H1 (cell line): ENCODE measurements at regions of chr3 and their contacts with region 1.

Region 1: GRCh38 chr3:127598841-127599570 is 795 bp downstream of the MCM2 start:
- DNase-seq: no peak
- H3K4me3 ChIP-seq: peak overlapping the region; percentile 74 to 84 (median 78)
- H3K27ac ChIP-seq: peak overlapping the region; percentile 97
- H3K4me1 ChIP-seq: peaks cover 9 to 12% (median 9%) of the 10 kb centered on the region in 4 experiments
- H3K27me3 ChIP-seq: no peaks in the 10 kb centered on the region
- CTCF ChIP-seq: no peak
- EP300 ChIP-seq: no peak
- POLR2A ChIP-seq: peak in 1 of 2 experiments; percentile 22; a peak in 1 of 3 replicates
- RAD21 ChIP-seq: no peak

Region 2: DNA sequence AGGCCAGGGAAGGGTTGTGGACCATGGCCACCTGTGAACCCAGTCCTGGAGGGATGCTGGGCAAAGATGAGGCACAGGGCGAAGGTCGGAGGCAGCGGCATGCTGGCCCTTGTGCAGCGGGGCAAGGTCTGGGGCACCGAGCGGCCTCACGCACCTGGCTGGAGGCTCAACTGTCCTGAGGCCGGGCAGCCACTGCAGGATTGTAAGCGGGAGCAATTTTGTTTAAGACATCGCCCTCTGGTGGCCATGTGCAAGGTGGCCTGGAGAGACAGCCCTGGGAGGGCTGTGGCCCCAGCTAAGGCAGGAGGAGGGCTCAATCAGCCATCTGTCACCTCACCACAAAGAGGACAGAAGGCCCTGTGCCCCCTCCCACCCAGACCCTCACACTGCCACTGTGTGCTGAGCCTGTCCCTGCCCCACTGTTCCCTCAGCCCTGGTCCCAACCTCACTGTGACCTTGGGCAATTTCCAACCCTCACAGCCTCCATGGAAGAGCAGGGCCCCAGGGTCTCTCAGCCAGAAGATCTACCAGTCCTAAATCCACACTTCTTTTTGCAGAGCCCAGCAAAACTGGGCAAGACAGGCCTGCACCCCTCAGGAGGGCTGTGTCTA is 54.7 kb before region 1 on chr3:
- CTCF ChIA-PET with region 1: no interaction called
- POLR2A ChIA-PET with region 1: no interaction called
- DNase-seq: peak in 1 of 2 experiments; percentile 91
- H3K4me3 ChIP-seq: no peak overlapping the region
- H3K27ac ChIP-seq: no peak overlapping the region
- H3K4me1 ChIP-seq: peaks cover 0 to 9% (median 6%) of the 10 kb centered on the region in 4 experiments; a peak in 6 of 7 replicates
- H3K27me3 ChIP-seq: peaks cover 0 to 3% (median 0%) of the 10 kb centered on the region in 4 experiments; a peak in 2 of 7 replicates
- CTCF ChIP-seq: peak in 2 of 3 experiments; percentile 82 to 86; a peak in 3 of 4 replicates
- EP300 ChIP-seq: no peak
- POLR2A ChIP-seq: no peak
- RAD21 ChIP-seq: peak; percentile 79 to 89

Region 3: GRCh38 chr3:127585493-127586413 is 13.3 kb before region 1 on chr3:
- CTCF ChIA-PET with region 1: interaction called, 3 read pairs
- POLR2A ChIA-PET with region 1: interaction called, 48 read pairs
- DNase-seq: no peak
- H3K4me3 ChIP-seq: no peak overlapping the region
- H3K27ac ChIP-seq: no peak overlapping the region
- H3K4me1 ChIP-seq: peaks cover 4 to 11% (median 6%) of the 10 kb centered on the region in 4 experiments
- H3K27me3 ChIP-seq: 0 out of 7 replicates have a peak, but pooled peaks cover 0 to 6% (median 0%) of the 10 kb centered on the region in 4 experiments
- CTCF ChIP-seq: no peak
- EP300 ChIP-seq: no peak
- POLR2A ChIP-seq: no peak
- RAD21 ChIP-seq: no peak

Region 4: DNA sequence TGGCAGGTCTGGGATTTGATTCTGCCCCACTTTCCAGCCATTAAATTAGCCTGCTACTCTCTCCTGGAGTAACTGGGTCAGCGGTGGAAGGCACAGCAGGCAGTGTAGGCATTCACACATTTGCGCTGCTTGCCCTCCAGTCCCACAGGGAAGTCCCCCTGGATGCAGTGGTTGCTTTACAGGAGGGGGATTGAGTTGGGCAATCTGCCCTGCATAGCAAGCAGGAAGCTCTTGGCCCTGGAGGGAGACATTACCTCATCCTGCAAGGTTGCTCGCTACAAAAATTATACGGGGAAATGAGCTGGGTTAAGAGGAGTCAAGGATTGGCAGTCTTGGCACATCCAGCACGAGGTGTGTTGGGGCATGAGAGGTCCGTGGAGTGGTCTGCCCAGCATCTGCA is 14.0 kb after region 1 on chr3:
- CTCF ChIA-PET with region 1: interaction called, 5 read pairs
- POLR2A ChIA-PET with region 1: interaction called, 182 read pairs
- DNase-seq: no peak
- H3K4me3 ChIP-seq: no peak overlapping the region
- H3K27ac ChIP-seq: no peak overlapping the region
- H3K4me1 ChIP-seq: no peaks in the 10 kb centered on the region
- H3K27me3 ChIP-seq: no peaks in the 10 kb centered on the region
- CTCF ChIP-seq: no peak
- EP300 ChIP-seq: no peak
- POLR2A ChIP-seq: 0 out of 3 replicates have a peak, but pooled peaks of 1 of the 2 experiments have one; percentile 16
- RAD21 ChIP-seq: no peak

Region 5: GRCh38 chr3:127628788-127629466 is 29.9 kb after region 1 on chr3 and contains the start of gene PODXL2:
- CTCF ChIA-PET with region 1: no interaction called
- POLR2A ChIA-PET with region 1: interaction called, 182 read pairs
- DNase-seq: peak; percentile 13 to 76
- H3K4me3 ChIP-seq: peak within 1 kb of the TSS; percentile 44 to 72 (median 56)
- H3K27ac ChIP-seq: no peak within 1 kb of the TSS
- H3K4me1 ChIP-seq: peaks cover 0 to 7% (median 3%) of the 10 kb centered on the region in 4 experiments; a peak in 5 of 7 replicates
- H3K27me3 ChIP-seq: peaks cover 13 to 34% (median 29%) of the 10 kb centered on the region in 4 experiments
- CTCF ChIP-seq: no peak
- EP300 ChIP-seq: no peak
- POLR2A ChIP-seq: no peak
- RAD21 ChIP-seq: no peak
- total RNA-seq, gene PODXL2: 31.4 and 31.6 TPM in 2 replicates